ENCODE measurements at regions of chr5 and their contacts with region 1.

Region 1: DNA sequence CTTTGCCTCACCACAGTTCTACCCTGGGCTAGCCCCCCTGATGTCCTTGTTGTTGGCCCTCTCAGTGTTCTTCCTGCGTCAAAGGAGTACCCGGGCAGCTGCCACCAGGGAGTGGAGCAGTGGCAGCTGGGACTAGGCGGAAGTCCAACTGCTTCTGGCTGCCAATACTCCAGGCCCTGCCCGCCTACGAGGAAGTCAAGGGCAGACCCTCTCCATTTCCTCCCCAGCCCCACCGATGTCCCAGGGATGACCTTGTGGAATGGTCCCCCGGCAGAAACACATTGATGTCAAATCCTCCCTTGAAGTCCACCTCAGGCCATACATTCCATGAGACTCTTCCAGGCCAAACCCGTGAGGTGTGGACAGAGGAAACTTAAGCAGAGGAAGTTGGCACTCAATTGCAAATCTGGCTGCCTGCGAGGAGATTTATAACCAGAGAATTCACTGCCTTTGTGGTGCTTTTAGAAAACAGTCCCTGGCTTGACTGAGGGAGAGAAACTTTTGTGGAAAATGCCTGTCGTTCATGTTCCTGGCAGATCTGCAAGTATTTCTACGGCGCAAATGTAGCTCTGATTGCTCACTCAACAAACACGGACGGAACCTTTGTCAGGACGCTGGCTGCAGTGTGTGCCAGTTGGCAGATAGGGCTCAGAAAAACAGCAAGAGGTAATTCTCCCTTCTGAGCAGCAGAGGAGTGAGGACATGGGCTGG is 339.7 kb downstream of the RAB3C start:
- DNase-seq: peak; percentile 62 to 90
- H3K4me3 ChIP-seq: no peak overlapping the region
- CTCF ChIP-seq: no peak
- POLR2A ChIP-seq: no peak

Region 2: GRCh38 chr5:57986761-57987341 is 935.8 kb before region 1 on chr5:
- intact Hi-C with region 1: loop called (anchors 10 kb)
- DNase-seq: no peak
- H3K4me3 ChIP-seq: no peak overlapping the region
- CTCF ChIP-seq: no peak
- POLR2A ChIP-seq: no peak

Measured in lower leg skin (tissue), 4 donors.